ENCODE measurements at regions of chr5 and their contacts with region 1.

Region 1: GRCh38 chr5:97009212-97009898 is 73.5 kb downstream of the LNPEP start:
- DNase-seq: no peak
- H3K4me3 ChIP-seq: no peak overlapping the region
- H3K27ac ChIP-seq: no peak overlapping the region
- H3K4me1 ChIP-seq: no peaks in the 10 kb centered on the region
- H3K27me3 ChIP-seq: no peaks in the 10 kb centered on the region
- CTCF ChIP-seq: no peak

Region 2: DNA sequence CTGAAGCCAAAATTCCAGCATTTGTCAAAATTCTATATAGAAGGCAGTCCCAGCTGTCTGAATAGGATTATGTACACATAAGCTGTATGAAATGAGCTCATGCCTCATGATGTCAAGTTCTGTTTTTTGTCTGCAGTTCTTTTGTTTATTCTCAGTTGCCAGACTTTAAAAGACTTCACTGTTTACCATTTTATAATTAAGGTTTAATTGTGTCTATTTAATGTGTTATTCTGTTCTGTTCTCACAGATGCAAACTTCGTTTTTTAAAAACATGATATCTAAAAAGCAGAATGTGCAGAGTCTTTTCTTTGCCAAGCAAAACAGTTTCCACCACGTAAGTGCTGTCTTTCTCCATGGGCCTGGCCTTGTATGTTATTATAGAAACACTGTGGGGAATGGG is 232.7 kb before region 1 on chr5:
- intact Hi-C with region 1: loop called (anchors 10 kb)
- DNase-seq: no peak
- H3K4me3 ChIP-seq: no peak overlapping the region
- H3K27ac ChIP-seq: no peak overlapping the region
- H3K4me1 ChIP-seq: no peaks in the 10 kb centered on the region
- H3K27me3 ChIP-seq: no peaks in the 10 kb centered on the region
- CTCF ChIP-seq: no peak

Region 3: DNA sequence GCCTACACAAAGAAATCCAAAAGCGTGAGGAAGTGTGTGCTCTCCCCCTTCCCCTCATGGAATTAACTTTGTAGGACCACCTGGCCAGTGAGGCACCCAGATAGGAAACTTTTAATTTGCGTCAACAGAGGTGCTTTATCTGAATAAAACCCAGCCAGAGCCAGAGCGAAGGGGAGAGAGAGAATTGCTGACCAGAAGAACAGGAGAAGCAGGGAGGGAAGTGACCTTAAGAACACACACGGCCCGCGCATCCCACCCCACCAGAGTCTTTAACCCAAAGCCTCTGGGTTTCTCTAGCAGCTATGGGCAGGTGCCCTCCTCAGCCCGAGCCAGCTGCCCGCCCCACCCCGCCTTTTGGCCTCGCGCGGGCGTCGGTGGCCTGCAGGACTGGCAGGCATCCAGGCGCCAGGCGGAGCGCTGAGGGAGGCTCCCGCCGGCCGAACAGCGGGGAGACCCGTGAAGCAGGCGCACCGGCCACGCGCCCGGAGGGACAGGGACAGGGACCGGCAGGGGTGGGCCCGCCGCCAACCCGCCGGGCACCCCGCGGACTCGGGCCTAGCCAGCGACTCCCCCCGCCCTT is 202.2 kb before region 1 on chr5:
- intact Hi-C with region 1: no loop called
- DNase-seq: peak; percentile 85
- H3K4me3 ChIP-seq: peak overlapping the region; percentile 67
- H3K27ac ChIP-seq: peak overlapping the region; percentile 98
- H3K4me1 ChIP-seq: peaks cover 10% of the 10 kb centered on the region
- H3K27me3 ChIP-seq: no peaks in the 10 kb centered on the region
- CTCF ChIP-seq: no peak